AG04450 (cell line): ENCODE measurements at regions of chr17 and their contacts with region 1.

Region 1: DNA sequence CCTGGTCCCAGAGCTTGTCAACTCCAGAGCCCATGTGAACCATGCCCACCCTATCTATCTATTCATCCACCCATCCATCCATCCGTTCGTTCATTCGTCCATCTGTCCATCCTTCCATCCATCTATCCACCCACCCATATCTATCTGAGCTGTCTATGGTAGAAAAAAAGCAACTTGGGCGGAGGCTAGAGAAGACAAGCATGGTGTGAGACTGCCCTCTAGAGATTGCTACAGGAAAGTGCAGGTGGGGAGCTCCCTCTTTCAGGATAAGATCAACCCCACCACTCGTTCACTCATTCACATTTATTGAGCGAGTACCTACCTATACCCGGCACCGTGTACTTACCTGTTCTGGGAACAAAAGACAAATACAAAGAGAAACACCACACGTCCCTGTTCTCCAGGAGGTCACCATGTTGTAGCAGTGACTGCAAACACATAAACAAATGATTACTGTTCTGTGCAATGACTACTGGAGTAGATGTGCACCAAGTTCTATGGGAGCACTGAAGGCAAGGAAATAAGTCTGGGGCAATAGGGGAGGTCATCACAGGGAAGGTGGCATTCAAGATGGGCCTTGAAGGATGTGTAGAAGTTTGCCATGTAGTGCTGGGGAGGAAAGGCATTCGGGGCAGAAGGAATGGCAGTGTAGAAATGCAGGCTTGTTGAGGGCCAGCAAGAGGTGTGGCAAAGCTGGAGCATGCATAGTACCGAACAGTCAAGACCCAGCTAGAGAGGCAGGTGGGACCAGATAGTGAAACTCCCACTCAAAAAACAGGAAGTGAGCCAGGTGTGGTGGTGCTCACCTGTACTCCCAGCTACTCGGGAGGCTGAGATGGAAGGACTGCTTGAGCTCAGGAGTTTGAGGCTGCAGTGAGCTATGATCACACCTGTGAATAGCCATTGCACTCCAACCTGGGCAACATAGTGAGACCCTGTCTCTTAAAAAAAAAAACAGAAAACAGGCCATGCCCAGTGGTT is 13.4 kb upstream of the ATP5MC1 start:
- DNase-seq: peak; percentile 33
- H3K4me3 ChIP-seq: no peak overlapping the region
- H3K27ac ChIP-seq: no peak overlapping the region
- H3K27me3 ChIP-seq: peaks cover 10% of the 10 kb centered on the region
- CTCF ChIP-seq: peak; percentile 97

Region 2: DNA sequence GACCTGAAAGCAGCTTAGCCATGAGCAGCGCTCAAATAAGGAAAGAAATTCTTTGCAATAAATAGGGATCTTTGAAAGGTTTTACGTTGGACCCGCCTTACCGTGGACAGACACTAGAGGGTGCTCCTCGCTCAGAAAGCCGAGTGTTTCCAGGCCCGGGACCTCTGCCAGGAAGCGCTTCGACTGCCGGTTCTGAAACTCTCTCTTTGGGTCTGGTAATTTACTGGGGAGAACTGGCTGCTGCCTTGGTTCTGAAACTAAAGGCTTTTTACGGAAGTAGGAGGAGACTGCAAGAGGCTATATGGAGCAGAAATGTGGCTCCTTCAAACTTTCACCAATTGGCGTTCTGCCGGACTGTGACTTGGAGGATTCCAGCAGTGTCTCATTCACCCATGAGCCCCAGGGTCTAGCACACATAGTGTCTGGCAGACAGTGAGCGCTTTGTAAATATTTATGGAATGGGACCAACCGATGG is 207.5 kb before region 1 on chr17:
- CTCF ChIA-PET with region 1: interaction called, 19 read pairs
- POLR2A ChIA-PET with region 1: no interaction called
- DNase-seq: peak; percentile 32
- H3K4me3 ChIP-seq: peak overlapping the region; percentile 58
- H3K27ac ChIP-seq: no peak overlapping the region
- H3K27me3 ChIP-seq: peaks cover 13% of the 10 kb centered on the region
- CTCF ChIP-seq: peak; percentile 94

Region 3: GRCh38 chr17:48718761-48719641 is 160.2 kb before region 1 on chr17:
- CTCF ChIA-PET with region 1: interaction called, 85 read pairs
- POLR2A ChIA-PET with region 1: no interaction called
- DNase-seq: no peak
- H3K4me3 ChIP-seq: no peak overlapping the region
- H3K27ac ChIP-seq: no peak overlapping the region
- H3K27me3 ChIP-seq: peaks cover 83% of the 10 kb centered on the region
- CTCF ChIP-seq: no peak

Region 4: GRCh38 chr17:48791128-48792032 is 87.8 kb before region 1 on chr17:
- CTCF ChIA-PET with region 1: interaction called, 10 read pairs
- POLR2A ChIA-PET with region 1: no interaction called
- DNase-seq: peak; percentile 55
- H3K4me3 ChIP-seq: no peak overlapping the region
- H3K27ac ChIP-seq: no peak overlapping the region
- H3K27me3 ChIP-seq: peaks cover 42% of the 10 kb centered on the region
- CTCF ChIP-seq: peak; percentile 91

Region 5: GRCh38 chr17:48816774-48817590 is 62.2 kb before region 1 on chr17 and contains the start of gene TTLL6:
- CTCF ChIA-PET with region 1: interaction called, 164 read pairs
- POLR2A ChIA-PET with region 1: no interaction called
- DNase-seq: peak; percentile 18
- H3K4me3 ChIP-seq: peak within 1 kb of the TSS; percentile 50
- H3K27ac ChIP-seq: peak within 1 kb of the TSS; percentile 39
- H3K27me3 ChIP-seq: peaks cover 33% of the 10 kb centered on the region
- CTCF ChIP-seq: no peak
- polyA plus RNA-seq, gene TTLL6: 0.04 and 0.06 TPM in 2 replicates

Region 6: GRCh38 chr17:48892940-48893645 is 13.9 kb after region 1 on chr17:
- CTCF ChIA-PET with region 1: interaction called, 18 read pairs
- POLR2A ChIA-PET with region 1: interaction called, 3 read pairs
- DNase-seq: no peak
- H3K4me3 ChIP-seq: peak overlapping the region; percentile 99
- H3K27ac ChIP-seq: peak overlapping the region; percentile 57
- H3K27me3 ChIP-seq: no peaks in the 10 kb centered on the region
- CTCF ChIP-seq: no peak